B cell (primary cell): ENCODE measurements at regions of chr1 and their contacts with region 1.

Region 1: DNA sequence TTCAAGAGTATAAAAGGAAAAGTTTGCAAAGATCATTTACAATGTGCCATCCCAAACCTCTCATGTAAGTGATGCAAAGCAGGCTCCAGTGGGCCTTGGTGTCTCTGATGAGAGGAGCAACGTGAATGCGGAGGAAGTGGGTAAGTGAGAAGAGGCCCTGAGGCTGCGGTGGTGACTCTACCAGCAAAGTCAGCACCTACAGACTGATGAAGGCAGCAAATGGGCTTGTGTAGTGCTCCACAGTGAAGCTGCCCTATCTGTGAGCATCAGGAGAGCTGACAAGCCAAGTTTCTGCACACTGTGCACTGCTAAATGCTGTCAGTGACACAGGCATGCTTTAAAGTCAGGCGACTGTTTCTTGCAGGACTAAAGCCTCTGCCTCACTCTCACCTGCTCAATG is 15.6 kb upstream of the RAP1A start:
- DNase-seq: peak; percentile 57
- ATAC-seq: peak; percentile 71
- H3K4me3 ChIP-seq: no peak overlapping the region
- H3K4me3 Mint-ChIP-seq: peak overlapping the region; percentile 47
- H3K27ac ChIP-seq: peak overlapping the region; percentile 12 to 14
- H3K27ac Mint-ChIP-seq: peak overlapping the region; percentile 83
- H3K4me1 ChIP-seq: peaks cover 50 to 57% of the 10 kb centered on the region in 2 donors
- H3K4me1 Mint-ChIP-seq: peaks cover 64% of the 10 kb centered on the region
- H3K27me3 ChIP-seq: no peaks in the 10 kb centered on the region
- H3K27me3 Mint-ChIP-seq: no peaks in the 10 kb centered on the region
- CTCF ChIP-seq: no peak

Region 2: GRCh38 chr1:111582644-111583618 is 21.0 kb before region 1 on chr1:
- CTCF ChIA-PET with region 1: interaction called, 5 read pairs
- POLR2A ChIA-PET with region 1: no interaction called
- intact Hi-C with region 1: loop called (anchors 2 kb)
- DNase-seq: no peak
- ATAC-seq: no peak
- H3K4me3 ChIP-seq: no peak overlapping the region
- H3K4me3 Mint-ChIP-seq: no peak overlapping the region
- H3K27ac ChIP-seq: no peak overlapping the region
- H3K27ac Mint-ChIP-seq: no peak overlapping the region
- H3K4me1 ChIP-seq: peaks cover 5 to 15% of the 10 kb centered on the region in 2 donors
- H3K4me1 Mint-ChIP-seq: peaks cover 9% of the 10 kb centered on the region
- H3K27me3 ChIP-seq: no peaks in the 10 kb centered on the region
- H3K27me3 Mint-ChIP-seq: no peaks in the 10 kb centered on the region
- CTCF ChIP-seq: no peak

Region 3: DNA sequence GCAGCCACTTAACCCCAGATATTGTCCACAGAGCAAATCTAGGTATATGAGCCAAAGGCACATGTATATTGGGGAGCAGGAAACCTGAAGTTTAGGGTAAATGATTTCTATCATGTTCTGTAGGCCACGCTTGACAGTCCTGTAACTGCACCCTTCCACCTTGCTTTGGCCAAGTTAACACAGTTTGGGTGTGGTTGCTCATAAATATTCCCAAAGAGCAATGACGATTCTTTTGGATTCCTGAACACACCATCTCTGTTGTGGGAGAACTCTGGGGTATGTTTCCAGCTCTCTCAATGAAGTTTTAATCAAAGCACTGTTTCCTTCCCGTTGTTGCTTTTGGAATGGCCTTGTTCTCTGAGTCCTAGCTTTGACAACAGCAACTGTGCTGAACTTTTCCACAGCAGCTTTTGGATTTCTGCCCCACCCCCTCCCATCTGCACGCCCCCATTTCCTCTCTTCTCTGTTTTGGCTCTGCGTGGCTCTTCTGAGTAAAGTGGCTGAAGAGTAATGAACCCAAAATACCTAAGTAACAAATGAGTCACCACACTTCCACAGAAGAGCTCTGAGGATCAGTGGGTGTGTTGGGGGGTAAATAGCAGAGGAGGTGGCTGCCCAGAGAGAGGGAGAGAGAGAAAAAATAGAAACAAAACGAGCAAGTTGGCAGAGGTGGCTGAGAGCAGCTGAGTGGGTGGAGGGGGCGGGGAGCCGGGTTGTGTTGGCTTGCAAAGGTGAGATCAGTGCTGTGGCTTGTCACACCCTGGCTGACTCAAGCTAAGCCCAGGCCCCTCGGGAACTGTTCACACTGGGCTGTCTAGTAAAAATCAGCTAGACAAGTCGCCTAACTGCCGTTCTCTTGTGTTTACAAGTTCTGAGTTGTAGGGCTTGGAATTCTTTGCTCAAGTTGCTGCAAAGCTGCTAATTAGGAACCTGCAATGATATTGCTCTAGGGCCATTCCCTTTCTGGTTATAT is 11.3 kb before region 1 on chr1:
- CTCF ChIA-PET with region 1: interaction called, 27 read pairs
- POLR2A ChIA-PET with region 1: interaction called, 4 read pairs
- intact Hi-C with region 1: loop called (anchors 1 kb)
- DNase-seq: peak; percentile 76
- ATAC-seq: peak; percentile 95
- H3K4me3 ChIP-seq: peak overlapping the region in 2 of 5 experiments; percentile 8 to 44
- H3K4me3 Mint-ChIP-seq: peak overlapping the region; percentile 66
- H3K27ac ChIP-seq: peak overlapping the region; percentile 63 to 70
- H3K27ac Mint-ChIP-seq: peak overlapping the region; percentile 83
- H3K4me1 ChIP-seq: peaks cover 60 to 63% of the 10 kb centered on the region in 2 donors
- H3K4me1 Mint-ChIP-seq: peaks cover 51% of the 10 kb centered on the region
- H3K27me3 ChIP-seq: no peaks in the 10 kb centered on the region
- H3K27me3 Mint-ChIP-seq: no peaks in the 10 kb centered on the region
- CTCF ChIP-seq: no peak

Region 4: GRCh38 chr1:111696330-111696729 is 92.4 kb after region 1 on chr1:
- CTCF ChIA-PET with region 1: no interaction called
- POLR2A ChIA-PET with region 1: no interaction called
- intact Hi-C with region 1: no loop called
- DNase-seq: no peak
- ATAC-seq: no peak
- H3K4me3 ChIP-seq: no peak overlapping the region
- H3K4me3 Mint-ChIP-seq: no peak overlapping the region
- H3K27ac ChIP-seq: peak overlapping the region in 1 of 2 donors; percentile 68
- H3K27ac Mint-ChIP-seq: peak overlapping the region; percentile 27
- H3K4me1 ChIP-seq: peaks cover 13 to 25% of the 10 kb centered on the region in 2 donors
- H3K4me1 Mint-ChIP-seq: peaks cover 45% of the 10 kb centered on the region
- H3K27me3 ChIP-seq: no peaks in the 10 kb centered on the region
- H3K27me3 Mint-ChIP-seq: no peaks in the 10 kb centered on the region
- CTCF ChIP-seq: no peak

Region 5: GRCh38 chr1:112006416-112006815 is 402.4 kb after region 1 on chr1:
- CTCF ChIA-PET with region 1: no interaction called
- POLR2A ChIA-PET with region 1: no interaction called
- intact Hi-C with region 1: no loop called
- DNase-seq: no peak
- ATAC-seq: no peak
- H3K4me3 ChIP-seq: no peak overlapping the region
- H3K4me3 Mint-ChIP-seq: no peak overlapping the region
- H3K27ac ChIP-seq: no peak overlapping the region
- H3K27ac Mint-ChIP-seq: no peak overlapping the region
- H3K4me1 ChIP-seq: no peaks in the 10 kb centered on the region
- H3K4me1 Mint-ChIP-seq: no peaks in the 10 kb centered on the region
- H3K27me3 ChIP-seq: peaks cover 0 to 3% (median 0%) of the 10 kb centered on the region in 4 experiments
- H3K27me3 Mint-ChIP-seq: peaks cover 28% of the 10 kb centered on the region
- CTCF ChIP-seq: no peak